ENCODE measurements at regions of chr4 and their contacts with region 1.

Region 1: DNA sequence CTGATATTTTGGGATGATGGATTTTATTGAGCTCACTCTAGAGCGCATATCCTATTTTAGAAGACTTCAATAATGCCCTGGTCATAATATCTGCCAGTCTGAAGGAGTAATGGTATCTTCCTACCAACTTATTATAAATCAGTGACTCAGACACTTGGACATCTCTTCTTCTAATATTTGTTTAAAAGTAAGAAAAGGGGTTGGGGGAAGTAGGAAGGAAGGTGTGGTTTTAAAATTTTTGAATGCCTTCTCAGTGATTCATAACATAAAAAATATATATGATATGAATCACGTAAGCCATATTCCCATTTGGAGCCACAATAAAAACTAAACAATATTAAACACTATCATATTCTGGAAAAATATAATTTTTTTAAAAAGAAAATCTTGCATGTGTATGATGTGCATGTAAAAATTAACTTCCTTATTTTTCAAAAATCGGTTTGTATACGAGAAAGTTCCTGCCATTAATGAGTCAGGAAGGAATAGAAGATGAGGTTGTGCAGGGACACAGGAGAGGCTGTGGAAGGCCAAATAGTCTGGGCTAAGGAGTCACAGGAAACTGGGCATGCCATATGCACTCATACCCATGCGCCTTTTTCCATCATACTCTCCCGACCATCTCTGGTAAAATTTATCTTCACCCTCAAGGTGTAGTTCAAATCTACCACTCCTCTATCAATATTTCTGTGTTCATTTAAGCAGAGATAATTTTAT is 286.5 kb downstream of the EPHA5 start:
- DNase-seq: peak; percentile 95
- ATAC-seq: peak; percentile 94
- H3K4me3 ChIP-seq: 0 out of 2 replicates have a peak overlapping the region, but pooled peaks have one; percentile 2
- H3K27ac ChIP-seq: peak overlapping the region; percentile 87
- H3K4me1 ChIP-seq: peaks cover 21% of the 10 kb centered on the region
- H3K27me3 ChIP-seq: no peaks in the 10 kb centered on the region
- CTCF ChIP-seq: no peak

Region 2: DNA sequence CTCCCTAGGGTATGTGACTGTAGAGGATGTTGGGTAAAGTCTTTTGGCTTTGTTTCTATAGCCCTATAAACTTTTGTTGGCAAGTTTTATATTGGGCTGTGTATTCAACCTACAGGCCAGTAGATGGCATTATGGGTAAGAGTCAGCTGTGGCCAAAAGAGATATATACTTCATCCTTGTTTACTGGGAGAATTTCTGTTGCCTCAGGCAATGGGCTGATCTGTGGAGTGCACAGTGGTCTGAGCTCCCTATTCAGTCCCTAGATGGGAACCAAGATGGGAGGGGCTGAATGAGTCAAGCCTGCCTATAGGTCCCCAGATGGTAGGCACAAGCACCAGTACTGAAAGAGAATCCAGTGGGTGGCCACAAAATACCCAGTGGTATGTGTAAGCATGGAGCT is 294.1 kb before region 1 on chr4:
- CTCF ChIA-PET with region 1: no interaction called
- POLR2A ChIA-PET with region 1: no interaction called
- intact Hi-C with region 1: loop called (anchors 5 kb)
- DNase-seq: peak; percentile 83
- ATAC-seq: peak; percentile 90
- H3K4me3 ChIP-seq: no peak overlapping the region
- H3K27ac ChIP-seq: no peak overlapping the region
- H3K4me1 ChIP-seq: 0 out of 2 replicates have a peak, but pooled peaks cover 12% of the 10 kb centered on the region
- H3K27me3 ChIP-seq: no peaks in the 10 kb centered on the region
- CTCF ChIP-seq: peak; percentile 79

Region 3: GRCh38 chr4:65193985-65194384 is 189.8 kb before region 1 on chr4:
- CTCF ChIA-PET with region 1: no interaction called
- POLR2A ChIA-PET with region 1: no interaction called
- intact Hi-C with region 1: loop called (anchors 5 kb)
- DNase-seq: no peak
- ATAC-seq: no peak
- H3K4me3 ChIP-seq: no peak overlapping the region
- H3K27ac ChIP-seq: no peak overlapping the region
- H3K4me1 ChIP-seq: peaks cover 5% of the 10 kb centered on the region
- H3K27me3 ChIP-seq: no peaks in the 10 kb centered on the region
- CTCF ChIP-seq: no peak

Region 4: GRCh38 chr4:65223601-65224000 is 160.1 kb before region 1 on chr4:
- CTCF ChIA-PET with region 1: no interaction called
- POLR2A ChIA-PET with region 1: no interaction called
- intact Hi-C with region 1: loop called (anchors 5 kb)
- DNase-seq: peak; percentile 87
- ATAC-seq: peak; percentile 94
- H3K4me3 ChIP-seq: no peak overlapping the region
- H3K27ac ChIP-seq: peak overlapping the region; percentile 43
- H3K4me1 ChIP-seq: peaks cover 16% of the 10 kb centered on the region
- H3K27me3 ChIP-seq: no peaks in the 10 kb centered on the region
- CTCF ChIP-seq: no peak

Region 5: DNA sequence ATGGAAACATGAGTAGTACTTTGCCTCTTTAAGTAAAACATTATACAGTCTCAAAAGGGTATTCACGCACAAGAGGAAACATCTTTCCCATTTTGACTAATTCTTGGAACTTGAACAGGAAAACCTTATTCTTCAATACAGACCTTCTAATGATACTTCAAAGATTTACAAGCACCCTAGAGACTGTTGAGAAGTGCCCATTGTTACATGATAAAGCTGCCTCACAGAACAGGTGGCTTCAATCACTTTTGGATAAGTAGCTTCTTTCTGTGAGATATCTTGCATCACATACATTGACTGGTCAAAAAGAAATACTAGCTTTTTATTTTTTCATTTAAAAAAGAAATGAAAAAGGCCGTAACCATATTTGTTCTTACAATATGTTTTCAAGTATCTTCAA is 67.2 kb after region 1 on chr4:
- CTCF ChIA-PET with region 1: no interaction called
- POLR2A ChIA-PET with region 1: no interaction called
- intact Hi-C with region 1: loop called (anchors 2 kb)
- DNase-seq: no peak
- ATAC-seq: no peak
- H3K4me3 ChIP-seq: no peak overlapping the region
- H3K27ac ChIP-seq: no peak overlapping the region
- H3K4me1 ChIP-seq: no peaks in the 10 kb centered on the region
- H3K27me3 ChIP-seq: no peaks in the 10 kb centered on the region
- CTCF ChIP-seq: no peak

Region 6: DNA sequence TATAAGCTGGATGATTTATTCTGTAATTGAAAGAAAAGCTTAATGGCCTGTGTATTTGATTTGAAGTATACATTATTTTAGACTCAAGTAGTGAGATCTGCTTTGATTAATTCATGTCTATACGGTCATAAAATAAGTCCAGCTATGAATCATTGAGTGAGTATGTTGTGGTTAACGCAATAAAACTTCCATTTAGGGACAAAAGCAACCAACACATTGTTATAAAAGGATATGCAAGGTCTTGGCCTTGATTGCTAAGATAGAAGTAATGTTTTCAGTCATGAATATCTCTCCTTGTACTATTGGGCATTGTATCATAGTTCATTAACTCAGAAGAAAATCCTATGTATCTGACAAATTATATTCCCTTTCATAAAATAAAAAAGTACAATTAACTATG is 124.4 kb after region 1 on chr4:
- CTCF ChIA-PET with region 1: no interaction called
- POLR2A ChIA-PET with region 1: no interaction called
- intact Hi-C with region 1: loop called (anchors 2 kb)
- DNase-seq: peak; percentile 98
- ATAC-seq: peak; percentile 72
- H3K4me3 ChIP-seq: 0 out of 2 replicates have a peak overlapping the region, but pooled peaks have one; percentile 12
- H3K27ac ChIP-seq: peak overlapping the region; percentile 79
- H3K4me1 ChIP-seq: peaks cover 46% of the 10 kb centered on the region
- H3K27me3 ChIP-seq: no peaks in the 10 kb centered on the region
- CTCF ChIP-seq: no peak

Measured in PC-3 (cell line).